ENCODE measurements at regions of chr14 and their contacts with region 1.

Region 1: DNA sequence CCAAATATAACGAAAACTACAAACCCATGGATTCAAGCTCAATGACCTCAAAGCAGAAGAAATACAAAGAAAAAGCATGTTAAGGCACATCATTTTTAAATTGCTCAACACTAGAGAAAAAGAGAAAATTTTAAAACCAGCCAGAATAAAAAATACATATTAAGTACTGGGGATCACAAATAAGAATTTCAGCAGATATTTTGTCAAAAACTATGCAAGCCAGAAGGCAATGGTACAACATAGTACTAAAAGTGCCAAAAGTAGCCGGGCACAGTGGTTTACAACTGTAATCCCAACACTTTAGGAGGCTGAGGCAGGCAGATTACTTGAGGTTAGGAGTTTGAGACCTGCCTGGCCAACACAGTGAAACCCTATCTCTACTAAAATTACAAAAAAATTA is 10.2 kb downstream of the SGPP1 start:
- DNase-seq: peak in 1 of 14 experiments; percentile 54
- ATAC-seq: no peak
- H3K4me3 ChIP-seq: no peak overlapping the region
- H3K4me3 Mint-ChIP-seq: no peak overlapping the region
- H3K27ac ChIP-seq: no peak overlapping the region
- H3K27ac Mint-ChIP-seq: no peak overlapping the region
- H3K4me1 ChIP-seq: peaks cover 7% of the 10 kb centered on the region
- H3K4me1 Mint-ChIP-seq: peaks cover 25% of the 10 kb centered on the region
- H3K27me3 ChIP-seq: no peaks in the 10 kb centered on the region
- H3K27me3 Mint-ChIP-seq: no peaks in the 10 kb centered on the region
- CTCF ChIP-seq: no peak

Region 2: GRCh38 chr14:63705561-63706070 is 12.1 kb before region 1 on chr14:
- CTCF ChIA-PET with region 1: no interaction called
- POLR2A ChIA-PET with region 1: interaction called, 3 read pairs
- intact Hi-C with region 1: loop called in 1 of 2 experiments (anchors 1 kb)
- DNase-seq: no peak
- ATAC-seq: no peak
- H3K4me3 ChIP-seq: no peak overlapping the region
- H3K4me3 Mint-ChIP-seq: no peak overlapping the region
- H3K27ac ChIP-seq: no peak overlapping the region
- H3K27ac Mint-ChIP-seq: peak overlapping the region; percentile 47
- H3K4me1 ChIP-seq: peaks cover 6% of the 10 kb centered on the region
- H3K4me1 Mint-ChIP-seq: peaks cover 57% of the 10 kb centered on the region
- H3K27me3 ChIP-seq: no peaks in the 10 kb centered on the region
- H3K27me3 Mint-ChIP-seq: no peaks in the 10 kb centered on the region
- CTCF ChIP-seq: no peak

Measured in CD4-positive, alpha-beta T cell (primary cell).